Kidney (tissue), 22 donors: ENCODE measurements at regions of chr10 and their contacts with region 1.

Region 1: GRCh38 chr10:125982260-125982948 is 86.0 kb downstream of the FANK1 start:
- DNase-seq: peak in 4 of 5 donors; percentile 53 to 92 (median 70)
- H3K4me3 ChIP-seq: no peak overlapping the region
- H3K27ac ChIP-seq: no peak overlapping the region
- H3K4me1 ChIP-seq: no peaks in the 10 kb centered on the region
- H3K27me3 ChIP-seq: no peaks in the 10 kb centered on the region
- CTCF ChIP-seq: peak; percentile 83

Region 2: DNA sequence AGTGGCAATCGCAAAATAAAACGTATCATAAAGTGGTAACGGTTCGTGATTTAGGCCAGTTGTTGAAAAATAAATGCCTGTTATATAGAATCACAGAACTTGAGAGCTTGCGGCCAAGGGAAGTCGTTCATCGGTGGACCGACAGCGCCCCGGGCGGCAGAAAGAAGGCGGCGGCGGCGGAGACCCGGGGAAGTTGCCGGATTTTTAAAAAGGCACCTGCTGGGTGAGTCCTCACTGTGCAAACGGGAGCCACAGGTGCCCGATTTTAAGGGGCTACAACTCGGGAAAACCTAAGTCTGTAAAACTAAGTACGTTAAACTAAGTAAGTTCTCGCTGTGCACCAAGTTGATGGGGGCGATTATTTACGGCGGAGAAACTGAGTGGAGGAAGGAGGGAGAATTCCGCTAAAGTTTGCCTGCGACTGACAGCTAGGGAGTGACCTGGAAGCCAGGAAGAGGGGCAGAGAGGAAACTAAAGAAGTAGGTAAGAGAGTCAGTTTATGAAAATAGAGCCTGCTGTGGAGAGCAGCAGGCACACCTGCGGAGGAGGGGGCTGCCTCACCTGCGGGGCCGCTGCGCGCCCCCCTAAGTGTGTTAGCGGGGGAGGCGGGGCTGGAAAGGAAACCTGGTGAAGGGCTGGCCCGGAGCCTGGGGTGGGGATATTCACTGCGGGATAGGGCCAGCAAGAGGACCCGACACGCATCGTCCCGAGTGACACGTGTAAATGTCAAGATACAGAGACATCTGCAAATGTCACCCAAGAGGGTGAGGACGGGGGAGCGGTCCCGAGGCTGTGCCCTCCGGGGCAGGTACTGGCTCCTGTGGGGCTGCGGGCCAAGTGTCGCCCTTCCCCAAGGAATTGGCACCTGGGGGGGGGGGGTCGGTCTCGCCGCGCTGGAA is 404.9 kb after region 1 on chr10:
- intact Hi-C with region 1: loop called (anchors 10 kb)
- DNase-seq: peak; percentile 77 to 87 (median 83)
- H3K4me3 ChIP-seq: peak overlapping the region; percentile 46 to 75 (median 48)
- H3K27ac ChIP-seq: no peak overlapping the region
- H3K4me1 ChIP-seq: peaks cover 0 to 2% (median 0%) of the 10 kb centered on the region in 3 donors
- H3K27me3 ChIP-seq: no peaks in the 10 kb centered on the region
- CTCF ChIP-seq: peak; percentile 64

Region 3: DNA sequence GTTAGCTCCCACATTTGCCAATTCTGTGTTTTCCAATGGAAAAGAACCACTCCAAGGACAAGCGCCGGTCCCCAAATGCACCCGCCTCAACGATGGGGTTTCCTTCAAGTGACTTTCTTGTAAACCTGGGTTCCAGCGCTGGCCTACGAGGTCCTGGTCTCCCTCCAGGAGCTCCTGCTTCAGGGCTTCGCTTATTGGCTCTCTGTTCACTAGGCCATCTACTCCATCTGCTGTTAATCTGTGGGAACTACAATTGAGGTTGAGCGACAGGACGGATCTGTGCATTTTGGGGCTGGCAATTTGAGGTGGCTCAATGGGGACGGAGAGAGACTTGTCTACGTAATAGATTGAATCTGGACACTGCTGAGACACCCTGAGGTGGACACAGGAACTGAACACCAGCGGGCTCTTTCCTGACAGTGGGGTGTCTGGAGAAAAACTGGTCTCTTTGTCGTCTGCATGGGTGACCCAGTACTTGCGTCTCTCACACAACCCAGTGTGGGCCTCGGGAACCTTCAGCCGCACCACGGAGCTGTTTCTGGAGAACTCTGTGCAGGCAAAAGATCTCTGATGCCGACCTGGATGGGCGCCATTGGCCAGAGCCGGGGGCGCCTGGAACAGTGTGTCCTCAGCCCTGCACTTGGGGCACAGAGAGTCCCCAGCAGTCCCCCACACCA is 521.8 kb after region 1 on chr10:
- intact Hi-C with region 1: loop called (anchors 10 kb)
- DNase-seq: peak in 4 of 5 donors; percentile 43 to 80 (median 60)
- H3K4me3 ChIP-seq: no peak overlapping the region
- H3K27ac ChIP-seq: no peak overlapping the region
- H3K4me1 ChIP-seq: no peaks in the 10 kb centered on the region
- H3K27me3 ChIP-seq: no peaks in the 10 kb centered on the region
- CTCF ChIP-seq: peak; percentile 83